Right lobe of liver (tissue), 6 donors: ENCODE measurements at regions of chr9 and their contacts with region 1.

Region 1: DNA sequence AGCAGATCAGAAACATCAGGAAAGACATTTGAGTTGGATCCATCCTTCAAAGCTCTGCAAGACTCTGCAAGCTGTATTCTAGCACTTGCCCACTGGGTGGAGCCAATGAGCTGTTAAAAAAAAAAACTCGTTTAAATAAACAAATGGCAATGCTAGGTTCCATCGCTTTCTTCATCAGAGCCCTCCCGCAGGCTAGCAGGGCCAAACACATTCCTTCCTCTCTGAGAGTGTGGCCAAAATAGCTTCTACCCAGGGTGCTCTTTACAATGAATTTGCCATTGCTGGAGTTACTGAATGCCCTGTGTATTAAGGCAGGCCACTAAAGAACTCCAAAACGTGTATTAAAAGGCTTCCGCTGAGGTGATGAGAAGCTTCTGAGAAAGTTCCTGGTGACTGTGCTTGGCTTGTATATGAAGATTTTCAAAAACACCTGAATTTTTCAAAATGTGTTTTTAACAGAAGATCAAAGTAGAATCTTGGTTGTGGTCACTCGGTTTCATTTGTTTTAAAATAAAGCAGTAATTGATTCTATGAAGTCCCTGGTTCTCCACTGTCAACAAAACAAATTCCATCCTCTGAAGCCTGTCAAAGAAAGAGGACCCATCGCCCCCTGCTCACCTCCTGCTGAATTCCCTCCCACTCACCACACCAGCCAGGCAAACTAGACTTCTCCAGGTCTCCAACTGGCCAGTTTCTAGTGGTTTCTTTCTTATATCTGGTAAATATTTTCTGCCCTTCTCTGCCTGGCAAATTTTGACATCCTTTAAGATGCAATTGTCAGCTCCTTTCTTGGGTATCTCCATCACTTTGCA is 36.5 kb upstream of the EQTN start:
- DNase-seq: peak in 2 of 3 donors; percentile 39 to 59
- ATAC-seq: peak; percentile 97 to 99 (median 98)
- H3K4me3 ChIP-seq: no peak overlapping the region
- H3K27ac ChIP-seq: no peak overlapping the region
- H3K4me1 ChIP-seq: no peaks in the 10 kb centered on the region
- H3K27me3 ChIP-seq: no peaks in the 10 kb centered on the region
- CTCF ChIP-seq: peak; percentile 86 to 92 (median 87)
- POLR2A ChIP-seq: no peak

Region 2: GRCh38 chr9:27539479-27540441 is 206.3 kb after region 1 on chr9:
- intact Hi-C with region 1: loop called in 1 of 2 experiments (anchors 5 kb)
- DNase-seq: peak in 2 of 3 donors; percentile 35 to 61
- ATAC-seq: peak; percentile 74 to 88 (median 80)
- H3K4me3 ChIP-seq: no peak overlapping the region
- H3K27ac ChIP-seq: peak overlapping the region; percentile 75 to 82 (median 80)
- H3K4me1 ChIP-seq: peaks cover 0 to 43% (median 12%) of the 10 kb centered on the region in 4 donors
- H3K27me3 ChIP-seq: no peaks in the 10 kb centered on the region
- CTCF ChIP-seq: no peak
- POLR2A ChIP-seq: no peak

Region 3: GRCh38 chr9:27558307-27558706 is 224.9 kb after region 1 on chr9:
- intact Hi-C with region 1: loop called in 1 of 2 experiments (anchors 10 kb)
- DNase-seq: no peak
- ATAC-seq: no peak
- H3K4me3 ChIP-seq: no peak overlapping the region
- H3K27ac ChIP-seq: no peak overlapping the region
- H3K4me1 ChIP-seq: no peaks in the 10 kb centered on the region
- H3K27me3 ChIP-seq: no peaks in the 10 kb centered on the region
- CTCF ChIP-seq: no peak
- POLR2A ChIP-seq: no peak